ENCODE measurements at regions of chr1 and their contacts with region 1.

Region 1: DNA sequence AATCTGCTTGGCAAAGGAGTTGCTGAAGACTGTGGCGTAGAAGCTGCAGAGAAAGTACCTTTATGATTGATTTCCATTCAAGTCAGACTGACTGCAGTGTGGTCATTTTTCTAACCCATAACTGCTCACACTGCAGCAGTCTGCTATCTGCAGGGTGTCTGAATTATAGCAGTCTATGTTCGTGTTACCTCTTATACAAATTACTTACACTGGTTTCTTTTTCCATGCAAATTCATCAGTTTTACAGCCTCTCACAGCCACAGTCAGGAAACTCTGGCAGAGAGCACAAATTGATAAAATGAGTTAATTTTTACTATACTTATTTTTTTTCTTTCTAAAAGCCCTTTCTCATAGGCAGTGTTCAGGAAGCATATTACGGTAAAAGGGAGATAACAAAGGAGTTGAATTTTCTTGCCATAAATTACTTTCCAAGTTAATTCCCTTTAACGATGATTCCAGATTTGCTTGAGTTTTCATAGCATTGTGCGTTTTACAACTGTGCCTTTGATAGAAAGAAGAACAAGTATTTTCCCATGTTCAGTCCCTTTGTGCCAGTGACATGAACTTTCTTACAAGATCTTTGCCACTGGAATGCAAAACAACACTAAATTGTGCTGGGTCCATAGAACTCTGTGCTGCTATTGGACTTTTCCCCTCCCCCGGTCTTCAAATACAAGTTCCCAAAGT is 261.5 kb downstream of the NFIA start:
- DNase-seq: no peak
- ATAC-seq: peak in 1 of 4 donors; percentile 14
- H3K4me3 ChIP-seq: no peak overlapping the region
- H3K27ac ChIP-seq: peak overlapping the region in 7 of 12 donors; percentile 10 to 44 (median 25)
- H3K4me1 ChIP-seq: peaks cover 0 to 44% (median 20%) of the 10 kb centered on the region in 12 donors
- H3K27me3 ChIP-seq: no peaks in the 10 kb centered on the region
- CTCF ChIP-seq: no peak
- POLR2A ChIP-seq: no peak

Region 2: GRCh38 chr1:61362351-61362750 is 18.5 kb after region 1 on chr1:
- intact Hi-C with region 1: no loop called
- DNase-seq: no peak
- ATAC-seq: no peak
- H3K4me3 ChIP-seq: no peak overlapping the region
- H3K27ac ChIP-seq: peak overlapping the region in 5 of 12 donors; percentile 1 to 31 (median 27)
- H3K4me1 ChIP-seq: peaks cover 0 to 21% (median 8%) of the 10 kb centered on the region in 12 donors
- H3K27me3 ChIP-seq: no peaks in the 10 kb centered on the region
- CTCF ChIP-seq: no peak
- POLR2A ChIP-seq: no peak

Region 3: GRCh38 chr1:61441723-61442262 is 97.9 kb after region 1 on chr1:
- intact Hi-C with region 1: loop called in 2 of 10 experiments (anchors 5 kb)
- DNase-seq: peak; percentile 54 to 78 (median 74)
- ATAC-seq: peak; percentile 41 to 86 (median 72)
- H3K4me3 ChIP-seq: no peak overlapping the region
- H3K27ac ChIP-seq: peak overlapping the region; percentile 3 to 83 (median 62)
- H3K4me1 ChIP-seq: peaks cover 3 to 76% (median 46%) of the 10 kb centered on the region in 12 donors
- H3K27me3 ChIP-seq: no peaks in the 10 kb centered on the region
- CTCF ChIP-seq: no peak
- POLR2A ChIP-seq: no peak